Activated CD4-positive, alpha-beta memory T cell treated with anti-CD3 and anti-CD28 coated beads, Interleukin-2, amount 10 ng/mL, durations not matched to agents 7 days and 5 days (primary cell): ENCODE measurements at regions of chr7 and their contacts with region 1.

Region 1: GRCh38 chr7:92833024-92833765 is 3.2 kb downstream of the CDK6 start:
- DNase-seq: peak; percentile 92
- H3K4me3 Mint-ChIP-seq: peak overlapping the region; percentile 89
- H3K27ac Mint-ChIP-seq: peak overlapping the region; percentile 95
- H3K4me1 Mint-ChIP-seq: peaks cover 43% of the 10 kb centered on the region
- H3K27me3 Mint-ChIP-seq: peaks cover 7% of the 10 kb centered on the region

Region 2: DNA sequence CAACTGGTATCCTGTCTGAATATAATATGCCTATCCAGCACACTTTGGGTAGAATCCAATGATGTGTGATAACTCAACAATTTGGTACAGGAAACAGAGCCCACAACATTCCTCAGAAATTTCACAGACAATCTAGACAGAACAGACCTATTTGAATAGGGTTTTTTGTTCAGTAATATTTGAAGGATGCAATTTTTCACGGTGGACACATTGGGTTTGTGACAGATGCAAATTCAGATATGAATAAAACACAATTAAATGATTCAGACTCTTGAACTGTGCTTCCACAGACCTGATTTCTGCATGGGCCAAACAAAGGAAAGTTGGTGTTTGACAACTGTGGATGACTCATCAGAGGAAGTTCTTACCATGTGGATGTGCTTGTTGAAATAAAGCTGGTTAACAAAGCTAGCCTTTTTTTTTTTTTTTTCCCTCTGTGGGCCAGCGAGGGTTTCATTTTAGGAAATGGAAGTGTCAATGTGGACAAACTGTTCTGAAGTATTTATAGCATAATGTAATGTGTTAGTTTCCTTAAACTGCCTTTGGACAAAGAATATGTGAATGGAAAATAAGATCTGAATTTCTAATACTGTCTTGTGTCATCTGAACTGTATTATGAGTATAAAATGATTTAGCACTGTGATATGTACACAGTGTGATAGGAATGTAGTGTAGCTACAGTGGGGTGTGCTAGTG is 199.8 kb before region 1 on chr7:
- CTCF ChIA-PET with region 1: interaction called, 8 read pairs
- POLR2A ChIA-PET with region 1: interaction called, 11 read pairs
- DNase-seq: no peak
- H3K4me3 Mint-ChIP-seq: peak overlapping the region; percentile 16
- H3K27ac Mint-ChIP-seq: peak overlapping the region; percentile 80
- H3K4me1 Mint-ChIP-seq: peaks cover 78% of the 10 kb centered on the region
- H3K27me3 Mint-ChIP-seq: no peaks in the 10 kb centered on the region

Region 3: GRCh38 chr7:92669616-92670165 is 163.5 kb before region 1 on chr7:
- CTCF ChIA-PET with region 1: interaction called, 10 read pairs
- POLR2A ChIA-PET with region 1: interaction called, 21 read pairs
- DNase-seq: no peak
- H3K4me3 Mint-ChIP-seq: no peak overlapping the region
- H3K27ac Mint-ChIP-seq: peak overlapping the region; percentile 38
- H3K4me1 Mint-ChIP-seq: peaks cover 73% of the 10 kb centered on the region
- H3K27me3 Mint-ChIP-seq: no peaks in the 10 kb centered on the region

Region 4: DNA sequence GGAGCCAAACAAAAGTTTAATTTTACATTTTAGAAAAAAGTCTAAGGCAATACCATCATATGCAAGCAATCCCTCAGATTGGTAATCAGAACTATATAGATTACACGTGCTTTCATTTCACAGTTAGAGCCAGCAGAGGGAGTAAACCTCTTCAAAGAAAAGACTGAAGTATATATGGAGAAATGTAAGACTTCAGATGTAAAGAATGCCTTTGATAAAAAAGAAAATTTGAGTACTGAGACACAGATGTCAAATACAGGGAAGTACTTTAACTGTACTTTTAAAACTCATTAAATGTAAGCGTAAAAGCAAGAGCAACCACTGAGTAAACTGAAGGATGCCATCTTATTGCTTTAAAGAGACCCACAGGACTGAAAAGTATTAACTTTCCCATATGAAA is 141.6 kb before region 1 on chr7:
- CTCF ChIA-PET with region 1: interaction called, 28 read pairs
- POLR2A ChIA-PET with region 1: interaction called, 20 read pairs
- DNase-seq: no peak
- H3K4me3 Mint-ChIP-seq: no peak overlapping the region
- H3K27ac Mint-ChIP-seq: peak overlapping the region; percentile 61
- H3K4me1 Mint-ChIP-seq: peaks cover 56% of the 10 kb centered on the region
- H3K27me3 Mint-ChIP-seq: no peaks in the 10 kb centered on the region

Region 5: DNA sequence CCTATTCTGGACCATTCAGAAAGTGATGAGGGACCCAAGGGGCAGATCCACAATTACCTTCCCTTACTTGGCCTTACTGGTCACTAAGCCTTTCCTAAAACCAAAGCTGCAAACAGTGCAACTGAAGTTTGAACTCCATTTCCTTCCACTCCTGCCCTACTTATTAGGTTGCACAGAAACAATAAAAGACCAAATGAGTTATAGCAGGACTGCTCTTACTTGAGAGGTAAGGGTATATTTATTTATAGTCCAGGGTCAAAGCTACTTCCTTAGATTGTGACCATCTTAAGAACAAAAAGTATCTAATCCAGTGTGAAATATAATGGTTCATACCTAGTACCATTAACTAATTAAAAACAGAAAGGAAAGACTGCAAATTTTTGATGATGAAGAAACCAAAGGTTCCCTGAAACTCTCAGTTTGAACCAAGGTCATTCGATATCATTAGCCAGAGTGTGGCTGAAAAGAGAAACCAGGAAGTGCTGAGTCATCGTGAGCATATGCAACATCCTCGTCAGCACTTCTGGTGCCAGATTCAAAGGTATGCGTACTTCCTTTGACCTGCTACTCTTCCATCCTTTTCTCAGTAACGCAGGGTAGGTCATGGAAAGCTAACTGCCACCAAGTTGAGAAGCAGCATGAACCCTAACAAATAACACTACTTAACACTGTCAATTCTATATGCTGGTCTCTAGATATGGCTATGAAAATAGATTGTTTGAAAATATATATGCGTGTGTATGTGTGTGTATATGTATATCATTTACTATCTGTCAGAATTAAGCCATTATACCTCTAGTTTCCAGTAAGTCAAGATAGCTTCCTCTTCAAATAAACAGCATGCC is 23.6 kb before region 1 on chr7:
- CTCF ChIA-PET with region 1: interaction called, 53 read pairs
- POLR2A ChIA-PET with region 1: interaction called, 271 read pairs
- DNase-seq: peak; percentile 83
- H3K4me3 Mint-ChIP-seq: peak overlapping the region; percentile 65
- H3K27ac Mint-ChIP-seq: peak overlapping the region; percentile 95
- H3K4me1 Mint-ChIP-seq: peaks cover 85% of the 10 kb centered on the region
- H3K27me3 Mint-ChIP-seq: no peaks in the 10 kb centered on the region

Region 6: DNA sequence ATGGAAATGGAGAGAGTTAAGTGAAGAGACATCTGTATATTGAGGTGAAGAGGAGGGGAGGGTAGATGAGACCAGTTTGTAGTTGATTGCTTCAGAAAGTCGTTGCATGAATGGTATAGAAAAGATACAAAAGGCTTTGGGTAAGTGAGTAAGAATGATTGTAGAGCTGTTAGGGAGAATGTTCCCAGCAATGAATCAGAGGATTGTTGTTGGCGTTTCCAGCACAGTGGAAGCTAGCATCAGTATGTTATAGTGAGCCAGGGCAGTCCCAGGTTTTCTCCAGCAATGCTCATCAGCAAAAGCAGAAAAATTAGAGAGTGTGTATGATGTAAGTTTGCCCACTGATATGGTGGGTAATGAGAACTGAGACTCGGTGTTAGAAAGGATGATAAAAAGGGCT is 18.5 kb after region 1 on chr7:
- CTCF ChIA-PET with region 1: no interaction called
- POLR2A ChIA-PET with region 1: no interaction called
- DNase-seq: no peak
- H3K4me3 Mint-ChIP-seq: no peak overlapping the region
- H3K27ac Mint-ChIP-seq: no peak overlapping the region
- H3K4me1 Mint-ChIP-seq: peaks cover 20% of the 10 kb centered on the region
- H3K27me3 Mint-ChIP-seq: peaks cover 2% of the 10 kb centered on the region

Region 7: DNA sequence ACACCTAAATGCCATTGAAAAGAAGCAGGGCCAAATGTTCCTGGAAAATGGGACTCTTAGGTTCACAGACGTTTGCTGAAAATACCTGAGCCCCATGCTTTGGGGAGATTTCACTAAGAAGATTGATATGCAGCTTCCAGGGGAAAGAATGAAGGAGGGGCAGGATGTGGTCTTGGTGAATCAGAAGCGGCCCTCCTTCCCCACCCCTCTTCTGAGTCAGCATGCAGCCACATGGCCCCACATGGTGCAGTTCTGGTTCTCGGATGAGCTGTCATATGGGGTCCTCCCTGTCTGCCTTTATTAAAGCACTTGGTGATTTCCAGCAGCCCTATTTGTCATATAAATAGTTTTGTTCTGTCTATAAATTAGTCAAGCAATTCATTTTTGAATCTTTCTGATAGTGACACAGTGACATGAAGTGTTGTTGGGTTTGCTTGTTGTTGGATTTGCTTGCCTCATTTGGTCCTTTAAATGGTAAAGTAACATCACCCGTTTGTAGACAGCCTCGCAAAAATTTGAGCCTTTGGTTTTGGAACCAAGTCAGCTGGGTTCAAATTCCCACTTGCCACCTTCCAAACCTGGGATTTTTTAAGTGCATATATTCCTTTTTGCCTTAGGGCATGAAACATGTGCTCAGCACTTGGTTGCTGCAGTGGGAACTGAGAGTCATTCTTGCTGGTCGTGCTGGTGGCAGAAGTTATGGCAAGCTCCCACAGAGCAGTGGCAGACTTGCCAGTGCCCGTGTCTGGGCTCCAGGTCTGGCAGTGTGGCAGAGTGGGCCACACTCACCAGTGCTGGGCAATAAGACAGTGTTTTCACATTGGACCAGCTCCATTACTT is 71.3 kb after region 1 on chr7:
- CTCF ChIA-PET with region 1: interaction called, 6 read pairs
- POLR2A ChIA-PET with region 1: interaction called, 15 read pairs
- DNase-seq: peak; percentile 91
- H3K4me3 Mint-ChIP-seq: no peak overlapping the region
- H3K27ac Mint-ChIP-seq: peak overlapping the region; percentile 80
- H3K4me1 Mint-ChIP-seq: peaks cover 27% of the 10 kb centered on the region
- H3K27me3 Mint-ChIP-seq: no peaks in the 10 kb centered on the region